ENCODE measurements at regions of chr5 and their contacts with region 1.

Region 1: GRCh38 chr5:149731639-149732323 is 1.7 kb downstream of the PPARGC1B start:
- DNase-seq: peak; percentile 42 to 75 (median 72)
- H3K4me3 ChIP-seq: peak overlapping the region; percentile 82
- H3K27ac ChIP-seq: peak overlapping the region in 1 of 2 donors; percentile 58
- H3K4me1 ChIP-seq: peaks cover 4% of the 10 kb centered on the region
- H3K27me3 ChIP-seq: no peaks in the 10 kb centered on the region
- CTCF ChIP-seq: no peak
- EP300 ChIP-seq: no peak
- POLR2A ChIP-seq: no peak

Region 2: DNA sequence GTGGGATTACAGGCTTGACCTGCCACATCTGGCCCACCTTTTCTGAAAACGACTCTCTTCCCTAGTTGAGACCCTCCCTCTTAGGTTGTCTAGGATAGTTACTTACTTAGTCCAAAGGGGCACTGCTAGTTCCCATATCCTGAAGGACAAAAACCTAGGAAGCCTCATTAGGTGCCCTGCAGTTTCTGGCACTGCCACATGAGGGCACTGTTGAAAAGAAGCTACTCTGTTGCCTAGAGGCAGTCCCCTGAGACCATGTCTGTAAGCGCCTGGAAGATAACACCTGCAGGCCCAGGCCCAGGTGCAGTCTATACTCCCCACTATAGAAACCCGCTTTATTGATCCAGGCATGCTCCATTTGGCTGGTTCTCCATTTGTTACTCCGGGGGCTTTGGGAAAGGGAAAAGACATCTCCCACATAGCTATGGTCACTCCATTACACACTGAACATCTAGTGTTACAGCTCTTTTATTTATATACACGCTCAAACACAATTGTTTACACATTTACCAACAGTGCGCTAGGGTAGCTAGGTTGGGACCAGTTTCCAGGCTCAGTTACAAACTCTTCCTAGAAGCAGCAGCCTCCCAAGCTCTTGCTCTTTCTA is 75.1 kb before region 1 on chr5:
- intact Hi-C with region 1: loop called in 1 of 4 experiments (anchors 5 kb)
- DNase-seq: peak in 1 of 5 donors; percentile 44
- H3K4me3 ChIP-seq: no peak overlapping the region
- H3K27ac ChIP-seq: no peak overlapping the region
- H3K4me1 ChIP-seq: no peaks in the 10 kb centered on the region
- H3K27me3 ChIP-seq: no peaks in the 10 kb centered on the region
- CTCF ChIP-seq: peak in 1 of 3 donors; percentile 25
- EP300 ChIP-seq: no peak
- POLR2A ChIP-seq: no peak

Region 3: DNA sequence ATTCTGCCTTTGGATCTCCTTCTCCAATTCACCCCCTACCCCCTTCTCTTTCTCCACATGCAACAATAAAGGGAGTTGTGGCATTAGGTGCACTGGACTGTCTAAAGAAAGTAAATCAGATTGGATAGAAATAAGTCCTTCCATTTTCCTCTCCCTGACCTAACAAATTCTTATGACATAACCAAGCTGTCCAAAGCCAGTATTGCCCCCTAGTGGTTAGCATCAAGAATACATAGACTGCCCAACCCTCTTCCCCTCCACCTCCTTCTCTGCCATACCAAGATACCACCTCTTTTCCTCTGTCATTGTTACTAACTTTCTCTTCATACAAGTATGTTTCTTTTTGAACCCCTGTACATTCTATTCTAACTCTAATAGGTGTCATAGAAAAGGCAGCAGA is 44.0 kb after region 1 on chr5:
- intact Hi-C with region 1: no loop called
- DNase-seq: no peak
- H3K4me3 ChIP-seq: no peak overlapping the region
- H3K27ac ChIP-seq: no peak overlapping the region
- H3K4me1 ChIP-seq: peaks cover 2% of the 10 kb centered on the region
- H3K27me3 ChIP-seq: no peaks in the 10 kb centered on the region
- CTCF ChIP-seq: no peak
- EP300 ChIP-seq: no peak
- POLR2A ChIP-seq: no peak

Region 4: GRCh38 chr5:149828161-149828884 is 96.5 kb after region 1 on chr5:
- intact Hi-C with region 1: loop called in 2 of 4 experiments (anchors 5 to 10 kb)
- DNase-seq: peak; percentile 77 to 92 (median 89)
- H3K4me3 ChIP-seq: no peak overlapping the region
- H3K27ac ChIP-seq: no peak overlapping the region
- H3K4me1 ChIP-seq: peaks cover 17% of the 10 kb centered on the region
- H3K27me3 ChIP-seq: no peaks in the 10 kb centered on the region
- CTCF ChIP-seq: peak; percentile 78 to 88 (median 82)
- EP300 ChIP-seq: no peak
- POLR2A ChIP-seq: no peak

Region 5: DNA sequence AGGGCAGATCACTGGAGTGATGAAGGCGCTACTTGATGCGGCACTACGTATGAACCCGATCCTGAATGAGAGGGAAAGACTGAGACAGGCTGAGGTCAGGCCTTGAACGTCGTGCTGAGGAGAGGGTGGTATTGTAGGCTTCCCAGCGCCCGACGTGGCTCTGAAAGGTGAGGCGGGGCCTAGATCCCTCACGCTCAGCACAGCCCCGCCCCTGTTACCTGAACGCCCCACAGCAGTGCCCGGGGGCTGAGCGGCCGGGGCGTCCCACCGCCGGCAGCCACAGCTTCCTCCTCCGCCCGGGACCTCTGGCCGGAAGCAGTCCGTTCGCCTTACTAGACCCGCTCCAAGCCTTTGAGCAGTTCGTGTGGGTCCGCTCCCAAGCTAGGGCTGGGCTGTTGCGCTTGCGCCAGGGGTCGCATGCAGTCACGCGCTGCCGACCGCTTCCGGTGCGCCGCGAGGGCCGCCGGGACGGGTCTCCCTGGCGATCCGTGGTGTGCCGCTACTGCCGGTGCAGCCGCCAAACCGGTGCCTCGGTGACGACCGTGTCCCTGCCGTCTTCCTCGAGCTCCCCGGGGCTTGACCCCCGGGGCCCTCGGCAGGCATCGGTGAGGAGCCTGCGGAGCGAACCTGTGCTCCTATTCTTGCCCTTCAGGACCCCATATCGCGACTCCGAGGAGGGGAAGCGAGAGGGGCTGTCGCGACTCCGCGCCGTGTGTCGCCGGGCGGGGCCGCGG is 268.6 kb after region 1 on chr5 and contains the starts of genes HMGXB3 and TIGD6:
- intact Hi-C with region 1: no loop called
- DNase-seq: peak; percentile 91 to 96 (median 92)
- H3K4me3 ChIP-seq: peak within 1 kb of the TSS; percentile 99
- H3K27ac ChIP-seq: peak within 1 kb of the TSS; percentile 81 to 86
- H3K4me1 ChIP-seq: peaks cover 4% of the 10 kb centered on the region
- H3K27me3 ChIP-seq: no peaks in the 10 kb centered on the region
- CTCF ChIP-seq: peak in 1 of 3 donors; percentile 15
- EP300 ChIP-seq: no peak
- POLR2A ChIP-seq: peak; percentile 67
- total RNA-seq, gene HMGXB3: 24.3 to 32.1 (median 28.1) TPM
- total RNA-seq, gene TIGD6: 2.0 to 6.1 (median 5.5) TPM